PC-3 (cell line): ENCODE measurements at regions of chr3 and their contacts with region 1.

Region 1: GRCh38 chr3:98918586-98918985 is 17.1 kb upstream of the DCBLD2 start:
- DNase-seq: peak; percentile 45
- ATAC-seq: no peak
- H3K4me3 ChIP-seq: no peak overlapping the region
- H3K27ac ChIP-seq: no peak overlapping the region
- H3K4me1 ChIP-seq: peaks cover 53% of the 10 kb centered on the region
- H3K27me3 ChIP-seq: no peaks in the 10 kb centered on the region
- CTCF ChIP-seq: no peak

Region 2: GRCh38 chr3:98151241-98151640 is 767.3 kb before region 1 on chr3:
- CTCF ChIA-PET with region 1: no interaction called
- POLR2A ChIA-PET with region 1: no interaction called
- intact Hi-C with region 1: no loop called
- DNase-seq: no peak
- ATAC-seq: no peak
- H3K4me3 ChIP-seq: no peak overlapping the region
- H3K27ac ChIP-seq: no peak overlapping the region
- H3K4me1 ChIP-seq: no peaks in the 10 kb centered on the region
- H3K27me3 ChIP-seq: peaks cover 8% of the 10 kb centered on the region; the same call in 1 of the 2 replicates
- CTCF ChIP-seq: no peak

Region 3: GRCh38 chr3:98875535-98875934 is 43.1 kb before region 1 on chr3:
- CTCF ChIA-PET with region 1: no interaction called
- POLR2A ChIA-PET with region 1: no interaction called
- intact Hi-C with region 1: no loop called
- DNase-seq: no peak
- ATAC-seq: no peak
- H3K4me3 ChIP-seq: no peak overlapping the region
- H3K27ac ChIP-seq: no peak overlapping the region
- H3K4me1 ChIP-seq: peaks cover 32% of the 10 kb centered on the region
- H3K27me3 ChIP-seq: no peaks in the 10 kb centered on the region
- CTCF ChIP-seq: no peak

Region 4: GRCh38 chr3:98962189-98962930 is 43.8 kb after region 1 on chr3:
- CTCF ChIA-PET with region 1: interaction called, 3 read pairs
- POLR2A ChIA-PET with region 1: interaction called, 6 read pairs
- intact Hi-C with region 1: loop called (anchors 5 kb)
- DNase-seq: peak; percentile 97
- ATAC-seq: peak; percentile 72
- H3K4me3 ChIP-seq: peak overlapping the region; percentile 64
- H3K27ac ChIP-seq: peak overlapping the region; percentile 97
- H3K4me1 ChIP-seq: peaks cover 78% of the 10 kb centered on the region
- H3K27me3 ChIP-seq: no peaks in the 10 kb centered on the region
- CTCF ChIP-seq: no peak

Region 5: GRCh38 chr3:98972155-98972554 is 53.6 kb after region 1 on chr3:
- CTCF ChIA-PET with region 1: no interaction called
- POLR2A ChIA-PET with region 1: interaction called, 3 read pairs
- intact Hi-C with region 1: loop called (anchors 2 kb)
- DNase-seq: peak; percentile 92
- ATAC-seq: peak; percentile 47
- H3K4me3 ChIP-seq: peak overlapping the region; percentile 34; the same call in 1 of the 2 replicates
- H3K27ac ChIP-seq: peak overlapping the region; percentile 98
- H3K4me1 ChIP-seq: peaks cover 82% of the 10 kb centered on the region
- H3K27me3 ChIP-seq: no peaks in the 10 kb centered on the region
- CTCF ChIP-seq: no peak